Activated CD8-positive, alpha-beta T cell treated with anti-CD3 and anti-CD28 coated beads for 36 hours (primary cell): ENCODE measurements at regions of chr6 and their contacts with region 1.

Region 1: DNA sequence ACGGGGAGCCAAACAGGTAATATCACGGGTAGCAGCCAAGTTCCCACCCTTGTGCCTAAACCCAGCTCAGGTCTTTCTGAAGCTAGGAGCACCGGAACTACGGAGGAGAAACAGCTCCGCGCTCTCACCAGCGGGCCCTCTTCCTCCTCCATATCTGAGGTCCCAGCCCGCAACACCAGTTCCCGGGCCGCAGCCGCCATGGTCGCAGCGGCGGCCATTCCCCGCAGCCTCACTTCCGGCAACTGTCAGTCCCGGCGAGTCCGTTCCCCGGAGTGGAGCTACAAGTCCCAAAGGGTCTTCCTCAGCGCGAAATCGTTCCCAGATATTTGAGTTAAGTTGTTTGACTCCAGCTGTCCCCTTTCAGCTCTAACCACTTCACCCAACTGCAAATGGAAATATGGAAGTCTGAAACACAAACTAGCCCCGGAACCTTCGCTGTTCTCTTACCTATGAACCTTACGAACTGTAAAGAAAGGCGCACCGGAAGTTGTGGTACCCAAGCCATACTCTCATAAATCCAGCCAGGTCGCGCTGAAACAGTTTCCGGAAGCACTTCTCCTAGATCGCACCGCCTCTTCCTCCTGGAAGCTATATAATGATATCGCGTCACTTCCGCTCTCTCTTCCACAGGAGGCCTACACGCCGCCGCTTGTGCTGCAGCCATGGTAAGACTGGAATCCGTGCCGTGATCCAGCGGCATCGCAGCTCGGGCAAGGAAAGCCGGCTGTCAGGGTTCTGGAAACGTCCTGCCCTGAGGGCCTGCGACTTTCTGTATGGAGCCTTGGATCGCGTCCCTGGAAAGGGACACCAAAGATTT is at the starts of genes RPS18 and VPS52:
- DNase-seq: peak; percentile 96
- ATAC-seq: peak; percentile 85
- H3K4me3 Mint-ChIP-seq: peak within 1 kb of the TSS; percentile 95
- H3K27ac Mint-ChIP-seq: peak within 1 kb of the TSS; percentile 100
- H3K4me1 Mint-ChIP-seq: peaks cover 36% of the 10 kb centered on the region
- H3K27me3 Mint-ChIP-seq: no peaks in the 10 kb centered on the region
- CTCF ChIP-seq: no peak
- total RNA-seq, gene RPS18: 4,910 to 4,938 TPM
- total RNA-seq, gene VPS52: 31.2 to 34.3 TPM

Region 2: GRCh38 chr6:33132081-33132524 is 139.6 kb before region 1 on chr6:
- CTCF ChIA-PET with region 1: no interaction called
- POLR2A ChIA-PET with region 1: no interaction called
- intact Hi-C with region 1: no loop called
- DNase-seq: no peak
- ATAC-seq: no peak
- H3K4me3 Mint-ChIP-seq: no peak overlapping the region
- H3K27ac Mint-ChIP-seq: no peak overlapping the region
- H3K4me1 Mint-ChIP-seq: no peaks in the 10 kb centered on the region
- H3K27me3 Mint-ChIP-seq: peaks cover 2% of the 10 kb centered on the region
- CTCF ChIP-seq: no peak

Region 3: GRCh38 chr6:33200219-33201146 is 71.2 kb before region 1 on chr6 and contains the starts of genes RXRB and SLC39A7:
- CTCF ChIA-PET with region 1: interaction called, 4 read pairs
- POLR2A ChIA-PET with region 1: interaction called, 18 read pairs
- intact Hi-C with region 1: no loop called
- DNase-seq: peak; percentile 100
- ATAC-seq: peak; percentile 66
- H3K4me3 Mint-ChIP-seq: peak within 1 kb of the TSS; percentile 98
- H3K27ac Mint-ChIP-seq: peak within 1 kb of the TSS; percentile 99
- H3K4me1 Mint-ChIP-seq: peaks cover 61% of the 10 kb centered on the region
- H3K27me3 Mint-ChIP-seq: no peaks in the 10 kb centered on the region
- CTCF ChIP-seq: no peak
- total RNA-seq, gene RXRB: 41.2 to 41.9 TPM
- total RNA-seq, gene SLC39A7: 43.1 to 43.3 TPM

Region 4: DNA sequence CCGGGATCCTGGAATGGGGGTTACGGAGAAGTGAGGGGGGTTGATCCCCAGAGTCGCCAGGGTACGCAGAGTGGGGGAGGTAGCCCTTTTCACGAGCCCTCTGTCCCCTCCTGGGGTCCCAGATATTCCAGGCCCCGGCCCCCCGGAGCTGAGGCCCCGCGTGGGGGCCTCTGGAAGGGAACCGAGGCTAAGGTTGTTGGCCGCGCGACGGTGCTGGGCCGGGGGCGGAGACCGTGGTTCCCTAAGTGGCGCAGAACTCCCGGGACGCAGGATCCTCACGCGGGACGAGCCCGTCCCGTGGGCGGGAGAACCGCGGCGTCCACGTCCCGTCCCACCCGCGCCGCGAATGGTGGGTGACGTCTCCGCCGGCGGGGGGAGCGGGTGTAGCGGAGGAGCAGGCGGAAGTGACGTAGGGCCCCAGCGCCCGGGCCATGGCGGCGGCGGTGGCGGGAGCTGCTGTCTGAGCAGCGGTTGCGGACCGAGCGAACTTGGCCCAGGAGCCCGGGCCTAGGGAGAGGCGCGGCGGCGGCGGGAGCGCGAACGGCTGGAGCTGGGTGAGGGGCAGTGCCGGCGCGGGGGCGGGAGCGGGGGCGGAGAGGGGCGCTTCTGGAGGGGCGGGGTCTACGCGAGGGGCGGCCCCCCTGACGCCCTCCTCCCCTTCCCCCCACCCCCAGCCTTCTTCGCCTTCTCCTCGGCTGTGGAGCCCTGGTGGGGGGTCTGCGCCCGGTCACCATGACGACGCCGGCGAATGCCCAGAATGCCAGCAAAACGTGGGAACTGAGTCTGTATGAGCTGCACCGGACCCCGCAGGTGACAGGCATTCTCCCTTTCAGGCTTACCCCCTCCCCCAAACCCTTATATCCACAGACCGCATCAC is 63.3 kb before region 1 on chr6 and contains the start of gene RING1:
- CTCF ChIA-PET with region 1: interaction called, 4 read pairs
- POLR2A ChIA-PET with region 1: interaction called, 21 read pairs
- intact Hi-C with region 1: no loop called
- DNase-seq: peak; percentile 89
- ATAC-seq: peak; percentile 24
- H3K4me3 Mint-ChIP-seq: peak within 1 kb of the TSS; percentile 77
- H3K27ac Mint-ChIP-seq: peak within 1 kb of the TSS; percentile 94
- H3K4me1 Mint-ChIP-seq: peaks cover 63% of the 10 kb centered on the region
- H3K27me3 Mint-ChIP-seq: no peaks in the 10 kb centered on the region
- CTCF ChIP-seq: no peak
- total RNA-seq, gene RING1: 26.8 to 27.5 TPM

Region 5: GRCh38 chr6:33288921-33289748 is 17.5 kb after region 1 on chr6 and contains the starts of genes PFDN6 and WDR46:
- CTCF ChIA-PET with region 1: interaction called, 35 read pairs
- POLR2A ChIA-PET with region 1: interaction called, 261 read pairs
- intact Hi-C with region 1: no loop called
- DNase-seq: peak; percentile 91
- ATAC-seq: peak; percentile 98
- H3K4me3 Mint-ChIP-seq: peak within 1 kb of the TSS; percentile 89
- H3K27ac Mint-ChIP-seq: peak within 1 kb of the TSS; percentile 89
- H3K4me1 Mint-ChIP-seq: peaks cover 33% of the 10 kb centered on the region
- H3K27me3 Mint-ChIP-seq: no peaks in the 10 kb centered on the region
- CTCF ChIP-seq: no peak
- total RNA-seq, gene PFDN6: 78.1 to 92.3 TPM
- total RNA-seq, gene WDR46: 64.0 to 72.2 TPM

Region 6: DNA sequence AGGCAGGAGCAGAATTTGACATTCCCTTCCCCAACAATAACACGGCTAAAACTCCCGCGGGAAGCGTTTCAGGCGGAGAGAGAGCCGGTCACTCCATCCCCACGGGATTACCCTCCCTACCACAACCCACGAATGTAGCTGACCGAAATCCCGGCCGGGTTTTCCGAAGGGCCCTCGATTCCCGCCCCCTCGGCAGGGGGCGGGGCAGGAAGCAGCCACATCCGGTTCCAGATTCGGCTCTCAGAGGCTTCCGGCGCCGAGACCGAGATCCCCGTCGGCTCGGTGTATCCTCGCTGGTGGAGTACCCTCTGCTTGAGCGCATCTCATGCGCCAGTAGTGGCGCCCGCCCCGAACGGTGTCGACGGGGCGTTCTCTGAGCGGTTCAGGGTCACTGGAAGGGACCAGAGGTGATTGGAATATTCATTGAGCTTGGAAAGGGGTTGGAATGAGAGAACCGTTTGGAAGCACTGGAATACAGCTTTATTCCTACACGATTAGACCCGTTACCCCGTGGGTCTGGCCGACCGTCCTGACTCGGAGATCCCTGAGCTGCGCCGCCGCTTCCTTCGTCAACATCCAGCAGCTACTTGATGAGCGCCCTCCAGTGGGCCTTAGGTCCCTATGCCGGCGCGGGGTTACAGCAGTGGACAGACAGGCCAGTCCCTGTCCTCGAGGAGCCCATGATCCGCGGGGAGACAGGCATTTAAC is 27.7 kb after region 1 on chr6:
- CTCF ChIA-PET with region 1: interaction called, 11 read pairs
- POLR2A ChIA-PET with region 1: interaction called, 261 read pairs
- intact Hi-C with region 1: no loop called
- DNase-seq: peak; percentile 96
- ATAC-seq: peak; percentile 86
- H3K4me3 Mint-ChIP-seq: peak overlapping the region; percentile 97
- H3K27ac Mint-ChIP-seq: peak overlapping the region; percentile 99
- H3K4me1 Mint-ChIP-seq: peaks cover 33% of the 10 kb centered on the region
- H3K27me3 Mint-ChIP-seq: no peaks in the 10 kb centered on the region
- CTCF ChIP-seq: peak; percentile 74

Region 7: DNA sequence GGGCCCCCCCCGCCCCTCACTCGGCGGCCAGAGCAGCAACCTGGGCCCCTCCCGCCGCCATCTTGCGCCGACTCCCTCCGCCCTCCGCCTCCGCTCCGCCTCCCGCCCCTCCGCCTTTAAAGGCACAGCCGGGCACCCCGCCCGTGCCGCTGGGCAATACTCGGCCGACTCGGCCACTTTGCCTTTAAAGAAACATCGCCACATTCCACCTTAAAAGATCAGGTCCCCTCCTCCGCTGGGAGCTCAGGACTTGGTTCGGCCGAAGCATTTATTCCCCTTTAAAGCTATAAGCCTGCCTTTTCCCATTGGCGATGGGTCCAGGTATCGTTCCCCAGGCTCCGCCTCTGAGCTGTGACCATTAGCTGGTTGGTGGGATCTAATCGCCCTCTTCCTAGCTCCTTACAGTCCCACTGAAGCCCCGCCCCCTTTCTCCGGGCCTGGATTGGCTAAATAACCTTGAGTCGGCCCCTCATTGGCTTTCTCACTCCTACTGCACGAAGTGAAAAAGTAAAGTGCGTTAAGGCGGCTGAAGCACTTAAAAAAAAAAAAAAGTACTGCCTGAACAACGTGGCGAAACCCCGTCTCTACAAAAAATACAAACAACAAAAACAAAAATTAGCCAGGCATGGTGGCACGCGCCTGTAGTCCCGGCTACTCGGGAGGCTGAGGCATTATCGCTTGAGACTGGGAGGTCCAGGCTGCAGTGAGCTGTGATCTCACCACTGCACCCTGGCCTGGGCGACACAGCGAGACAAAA is 46.2 kb after region 1 on chr6 and contains the start of gene ZBTB22:
- CTCF ChIA-PET with region 1: interaction called, 5 read pairs
- POLR2A ChIA-PET with region 1: interaction called, 31 read pairs
- intact Hi-C with region 1: no loop called
- DNase-seq: peak; percentile 100
- ATAC-seq: peak; percentile 67
- H3K4me3 Mint-ChIP-seq: peak within 1 kb of the TSS; percentile 97
- H3K27ac Mint-ChIP-seq: peak within 1 kb of the TSS; percentile 97
- H3K4me1 Mint-ChIP-seq: peaks cover 68% of the 10 kb centered on the region
- H3K27me3 Mint-ChIP-seq: no peaks in the 10 kb centered on the region
- CTCF ChIP-seq: no peak
- total RNA-seq, gene ZBTB22: 7.2 to 7.5 TPM

Region 8: DNA sequence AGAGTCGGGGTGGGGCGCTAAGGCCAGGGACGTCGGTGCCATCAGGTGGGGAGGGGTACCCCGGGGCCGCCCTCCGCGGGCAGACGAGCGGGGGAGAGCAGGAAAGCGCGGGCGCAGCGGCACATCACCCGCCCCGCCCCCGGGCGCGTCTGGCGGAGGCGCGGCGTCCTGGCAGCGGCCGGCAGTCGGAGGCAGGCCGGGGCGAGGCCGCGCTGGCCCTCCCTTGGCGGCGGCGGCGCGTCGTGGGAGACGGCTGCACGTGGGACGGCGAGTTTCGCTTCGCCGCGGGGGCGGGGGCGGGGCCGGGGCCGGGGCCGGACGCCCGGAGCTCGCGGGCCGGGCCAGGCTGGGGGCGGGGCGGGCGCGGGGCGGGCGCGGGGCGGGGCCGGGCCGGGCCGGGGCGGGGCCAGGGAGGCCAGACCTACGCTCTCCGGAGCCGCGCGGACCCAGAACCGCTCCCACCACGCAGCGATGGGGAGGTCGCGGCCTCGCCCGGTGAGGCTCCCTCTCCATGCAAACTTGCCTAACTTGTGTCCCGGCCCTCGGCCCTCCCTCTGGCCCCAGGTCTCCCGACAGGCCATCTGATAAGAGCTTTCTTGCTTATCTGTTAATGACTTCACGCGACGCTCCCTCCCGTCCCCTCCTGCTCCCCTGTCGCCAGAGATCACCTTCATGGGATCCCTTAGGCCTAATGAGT is 361.9 kb after region 1 on chr6:
- CTCF ChIA-PET with region 1: no interaction called
- POLR2A ChIA-PET with region 1: no interaction called
- intact Hi-C with region 1: no loop called
- DNase-seq: peak; percentile 54
- ATAC-seq: peak; percentile 83
- H3K4me3 Mint-ChIP-seq: peak overlapping the region; percentile 74
- H3K27ac Mint-ChIP-seq: no peak overlapping the region
- H3K4me1 Mint-ChIP-seq: peaks cover 46% of the 10 kb centered on the region
- H3K27me3 Mint-ChIP-seq: no peaks in the 10 kb centered on the region
- CTCF ChIP-seq: no peak